Right cardiac atrium (tissue), 5 donors: ENCODE measurements at regions of chr11 and their contacts with region 1.

Region 1: DNA sequence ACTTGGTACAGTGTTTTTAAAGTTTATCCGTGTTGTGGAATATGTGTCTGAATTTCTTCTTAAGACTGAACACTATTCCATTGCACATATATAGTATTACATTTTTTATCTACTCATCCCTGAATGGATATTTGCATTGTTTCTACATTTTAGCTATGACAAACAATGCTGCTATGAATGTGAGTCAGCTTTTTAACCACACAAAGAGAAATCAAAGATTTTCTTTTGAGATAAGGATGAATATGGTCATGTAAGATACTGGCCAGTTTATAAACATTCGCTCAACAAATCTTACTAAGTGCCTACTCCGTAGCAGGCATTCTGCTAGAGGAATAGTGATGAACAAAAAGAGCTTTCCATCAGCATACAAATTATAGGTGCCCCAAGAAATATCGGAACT is 16.5 kb upstream of the OR9G4 start:
- DNase-seq: no peak
- ATAC-seq: no peak
- H3K4me3 ChIP-seq: no peak overlapping the region
- H3K27ac ChIP-seq: no peak overlapping the region
- H3K4me1 ChIP-seq: no peaks in the 10 kb centered on the region
- H3K27me3 ChIP-seq: no peaks in the 10 kb centered on the region

Region 2: DNA sequence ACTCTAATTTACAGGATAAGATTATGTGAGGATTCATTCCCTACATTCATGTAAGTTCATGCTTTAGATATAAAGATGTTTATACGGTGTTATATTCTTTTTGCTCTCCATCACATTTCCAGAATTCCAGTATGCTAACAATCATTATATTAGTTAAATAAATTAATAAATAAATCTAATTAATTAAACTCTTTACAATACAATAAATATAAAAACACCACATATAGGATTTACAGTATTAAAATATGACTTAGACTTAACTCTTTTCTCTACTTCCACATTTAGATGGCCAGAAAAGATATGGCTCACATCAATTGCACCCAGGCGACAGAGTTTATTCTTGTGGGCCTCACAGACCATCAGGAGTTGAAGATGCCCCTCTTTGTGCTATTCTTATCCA is 389.7 kb before region 1 on chr11 and contains the start of gene OR8U1:
- intact Hi-C with region 1: no loop called
- DNase-seq: no peak
- ATAC-seq: no peak
- H3K4me3 ChIP-seq: no peak within 1 kb of the TSS
- H3K27ac ChIP-seq: no peak within 1 kb of the TSS
- H3K4me1 ChIP-seq: no peaks in the 10 kb centered on the region
- H3K27me3 ChIP-seq: no peaks in the 10 kb centered on the region
- total RNA-seq, gene OR8U1: not detected

Region 3: DNA sequence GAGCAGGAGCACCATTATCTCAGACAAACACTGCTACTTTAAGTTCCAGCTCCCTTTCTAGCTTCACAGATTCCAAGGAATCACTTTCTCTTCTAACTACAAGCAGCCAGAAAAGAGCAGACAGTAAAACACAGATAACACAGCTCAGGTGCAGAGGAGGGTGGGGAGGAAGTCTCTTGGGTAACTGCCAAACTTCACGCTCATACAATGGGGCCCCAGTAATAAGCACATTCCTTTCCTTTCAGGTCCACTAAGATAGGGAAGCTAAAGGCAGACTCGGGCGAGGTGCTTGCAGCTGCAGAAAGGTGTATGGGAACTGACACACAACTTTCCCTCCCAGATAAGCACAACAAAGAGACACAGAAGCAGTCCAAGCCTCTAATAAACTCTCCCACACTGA is 52.7 kb after region 1 on chr11:
- intact Hi-C with region 1: no loop called
- DNase-seq: no peak
- ATAC-seq: no peak
- H3K4me3 ChIP-seq: no peak overlapping the region
- H3K27ac ChIP-seq: no peak overlapping the region
- H3K4me1 ChIP-seq: no peaks in the 10 kb centered on the region
- H3K27me3 ChIP-seq: no peaks in the 10 kb centered on the region

Region 4: DNA sequence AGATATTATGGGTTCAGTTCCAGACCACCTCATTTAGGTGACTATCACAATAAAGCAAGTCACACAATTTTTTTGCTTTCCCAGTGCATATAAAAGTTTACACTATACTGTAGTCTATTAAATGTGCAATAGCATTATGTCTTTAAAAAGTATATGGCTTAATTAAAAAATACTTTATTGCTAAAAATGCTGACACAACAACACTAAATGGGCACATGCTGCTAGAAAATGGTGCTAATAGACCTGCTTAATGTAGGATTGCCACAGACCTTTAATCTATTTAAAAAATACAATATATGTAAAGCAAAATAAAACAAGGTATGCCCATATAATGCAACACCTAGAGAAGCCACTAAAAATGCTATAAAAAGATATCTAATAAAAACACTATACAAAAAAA is 196.6 kb after region 1 on chr11:
- intact Hi-C with region 1: loop called in 1 of 4 experiments (anchors 5 kb)
- DNase-seq: no peak
- ATAC-seq: no peak
- H3K4me3 ChIP-seq: no peak overlapping the region
- H3K27ac ChIP-seq: no peak overlapping the region
- H3K4me1 ChIP-seq: no peaks in the 10 kb centered on the region
- H3K27me3 ChIP-seq: no peaks in the 10 kb centered on the region